PC-3 (cell line): ENCODE measurements at regions of chr5 and their contacts with region 1.

Region 1: DNA sequence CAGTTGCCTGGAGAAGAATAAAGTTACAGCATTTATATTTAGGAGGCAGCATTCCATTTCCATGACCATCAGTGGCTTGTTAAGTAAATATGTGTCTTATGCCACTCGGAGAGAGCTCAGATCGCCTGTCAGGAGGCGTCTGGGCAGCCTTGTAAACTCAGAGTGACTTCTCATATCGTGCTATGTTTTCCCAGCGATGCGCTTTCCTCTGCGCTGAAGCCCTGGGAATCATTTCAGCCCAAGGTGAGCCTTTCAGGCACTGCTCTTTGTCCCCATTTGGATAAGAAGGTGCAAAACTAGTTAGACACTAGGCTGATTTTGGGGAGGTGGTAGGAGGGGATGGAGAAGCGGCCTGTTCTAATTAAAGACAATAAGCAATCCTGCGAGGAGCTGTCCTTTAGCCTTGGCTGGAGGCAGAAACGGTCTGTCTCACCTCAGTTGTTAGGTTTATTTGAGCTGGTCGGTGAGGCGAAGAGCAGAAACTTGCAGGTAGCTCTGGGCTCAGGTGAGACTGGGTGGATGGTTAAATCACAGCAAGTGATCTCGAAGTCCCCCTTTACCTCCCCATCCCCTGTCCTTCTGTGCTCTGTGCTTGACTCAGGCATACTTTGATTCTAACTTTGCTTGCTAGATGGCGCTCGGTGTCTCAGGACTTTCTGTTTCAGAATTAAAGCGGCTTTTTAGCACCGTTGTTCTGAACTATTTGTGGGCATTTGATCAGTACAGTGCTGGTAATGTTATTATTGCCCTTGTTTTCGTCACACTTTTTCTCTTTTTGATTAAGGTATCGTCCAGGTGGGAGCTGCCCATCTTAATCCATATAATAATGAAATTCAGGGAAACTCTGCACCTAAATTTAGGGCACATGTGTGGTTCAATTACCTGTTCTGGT is 24.6 kb downstream of the NR2F1 start:
- DNase-seq: peak; percentile 94
- ATAC-seq: peak; percentile 94
- H3K4me3 ChIP-seq: peak overlapping the region; percentile 70
- H3K27ac ChIP-seq: peak overlapping the region; percentile 50
- H3K4me1 ChIP-seq: peaks cover 32% of the 10 kb centered on the region
- H3K27me3 ChIP-seq: peaks cover 25% of the 10 kb centered on the region
- CTCF ChIP-seq: peak; percentile 90

Region 2: GRCh38 chr5:92560698-92561361 is 1046.8 kb before region 1 on chr5:
- CTCF ChIA-PET with region 1: interaction called, 10 read pairs
- POLR2A ChIA-PET with region 1: no interaction called
- intact Hi-C with region 1: no loop called
- DNase-seq: peak; percentile 4
- ATAC-seq: no peak
- H3K4me3 ChIP-seq: no peak overlapping the region
- H3K27ac ChIP-seq: peak overlapping the region; percentile 79
- H3K4me1 ChIP-seq: peaks cover 37% of the 10 kb centered on the region
- H3K27me3 ChIP-seq: no peaks in the 10 kb centered on the region
- CTCF ChIP-seq: no peak

Region 3: GRCh38 chr5:93557021-93557604 is 50.5 kb before region 1 on chr5:
- CTCF ChIA-PET with region 1: no interaction called
- POLR2A ChIA-PET with region 1: no interaction called
- intact Hi-C with region 1: no loop called
- DNase-seq: peak; percentile 19
- ATAC-seq: peak; percentile 88
- H3K4me3 ChIP-seq: no peak overlapping the region
- H3K27ac ChIP-seq: peak overlapping the region; percentile 7; the same call in 1 of the 2 replicates
- H3K4me1 ChIP-seq: 0 out of 2 replicates have a peak, but pooled peaks cover 8% of the 10 kb centered on the region
- H3K27me3 ChIP-seq: no peaks in the 10 kb centered on the region
- CTCF ChIP-seq: no peak

Region 4: GRCh38 chr5:93789173-93790070 is 181.8 kb after region 1 on chr5:
- CTCF ChIA-PET with region 1: interaction called, 14 read pairs
- POLR2A ChIA-PET with region 1: no interaction called
- intact Hi-C with region 1: loop called (anchors 1 kb)
- DNase-seq: peak; percentile 90
- ATAC-seq: peak; percentile 92
- H3K4me3 ChIP-seq: no peak overlapping the region
- H3K27ac ChIP-seq: peak overlapping the region; percentile 27
- H3K4me1 ChIP-seq: peaks cover 26% of the 10 kb centered on the region
- H3K27me3 ChIP-seq: no peaks in the 10 kb centered on the region
- CTCF ChIP-seq: peak; percentile 62

Region 5: DNA sequence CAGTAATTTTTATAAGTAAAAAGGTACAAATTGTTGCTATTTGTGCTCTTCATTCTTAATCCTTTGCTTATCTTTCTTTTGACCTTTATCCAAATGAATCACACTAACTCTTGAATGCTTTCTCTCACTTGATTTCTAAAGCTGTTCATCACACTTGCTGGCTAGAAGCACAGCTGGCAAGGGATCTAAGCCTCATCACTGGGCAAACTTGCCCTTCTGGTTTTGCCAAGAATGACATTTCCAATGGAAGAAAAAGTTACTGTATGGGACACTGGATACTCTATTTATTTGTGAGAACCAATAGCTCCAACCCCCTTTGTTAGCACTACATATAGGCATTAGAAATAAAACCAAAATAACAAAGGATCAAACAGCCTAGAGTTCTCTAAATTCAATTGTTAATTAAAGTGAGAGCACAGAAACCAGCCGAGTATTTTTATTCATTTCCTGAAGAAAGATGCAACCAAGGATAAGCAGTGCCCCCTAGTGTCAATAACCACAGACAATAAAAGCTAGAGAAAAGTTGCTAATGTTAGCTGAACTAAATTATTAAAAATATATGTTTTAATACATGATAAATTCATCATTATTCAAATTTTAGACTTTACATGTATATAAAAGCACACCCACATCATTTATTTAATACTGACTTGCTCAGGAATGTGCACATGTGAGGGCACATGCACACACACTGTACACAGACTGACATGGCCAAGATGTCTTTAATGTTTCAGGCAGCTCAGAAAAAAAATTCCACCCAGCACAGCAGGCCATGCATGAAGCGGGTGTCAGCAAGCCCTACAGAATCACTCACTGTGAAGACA is 193.6 kb after region 1 on chr5:
- CTCF ChIA-PET with region 1: interaction called, 12 read pairs
- POLR2A ChIA-PET with region 1: no interaction called
- intact Hi-C with region 1: loop called (anchors 1 kb)
- DNase-seq: peak; percentile 90
- ATAC-seq: peak; percentile 92
- H3K4me3 ChIP-seq: peak overlapping the region; percentile 36; the same call in 1 of the 2 replicates
- H3K27ac ChIP-seq: no peak overlapping the region
- H3K4me1 ChIP-seq: peaks cover 16% of the 10 kb centered on the region
- H3K27me3 ChIP-seq: no peaks in the 10 kb centered on the region
- CTCF ChIP-seq: peak; percentile 85

Region 6: GRCh38 chr5:93909356-93909755 is 301.7 kb after region 1 on chr5:
- CTCF ChIA-PET with region 1: no interaction called
- POLR2A ChIA-PET with region 1: no interaction called
- intact Hi-C with region 1: loop called (anchors 10 kb)
- DNase-seq: peak; percentile 53
- ATAC-seq: 0 out of 2 replicates have a peak, but pooled peaks have one; percentile 35
- H3K4me3 ChIP-seq: no peak overlapping the region
- H3K27ac ChIP-seq: no peak overlapping the region
- H3K4me1 ChIP-seq: no peaks in the 10 kb centered on the region
- H3K27me3 ChIP-seq: no peaks in the 10 kb centered on the region
- CTCF ChIP-seq: peak; percentile 58